Mammary epithelial cell (primary cell): ENCODE measurements at regions of chr22 and their contacts with region 1.

Region 1: DNA sequence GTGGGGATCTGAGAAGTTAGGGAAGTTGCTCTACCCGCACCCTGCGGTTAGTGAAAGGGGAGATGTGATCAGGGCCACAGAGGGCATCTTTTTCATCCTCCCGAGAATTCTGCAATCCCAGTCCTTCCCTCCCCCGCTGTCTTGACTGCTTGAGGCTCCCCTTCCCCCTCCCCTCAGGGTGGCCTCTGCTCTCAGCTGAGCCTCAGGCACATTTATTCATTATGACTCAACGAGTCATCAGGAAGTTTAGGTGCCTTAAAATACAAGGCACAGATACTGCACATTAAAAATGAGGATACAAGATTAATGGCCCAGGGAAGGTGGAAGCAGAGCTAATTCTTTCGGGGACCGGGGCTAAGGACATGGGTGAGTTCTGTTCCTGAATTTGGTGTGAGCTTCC is 104.0 kb downstream of the CACNA1I start:
- DNase-seq: peak; percentile 23
- H3K4me3 ChIP-seq: no peak overlapping the region
- H3K27ac ChIP-seq: no peak overlapping the region
- H3K4me1 ChIP-seq: peaks cover 3% of the 10 kb centered on the region
- H3K27me3 ChIP-seq: no peaks in the 10 kb centered on the region
- CTCF ChIP-seq: no peak

Region 2: DNA sequence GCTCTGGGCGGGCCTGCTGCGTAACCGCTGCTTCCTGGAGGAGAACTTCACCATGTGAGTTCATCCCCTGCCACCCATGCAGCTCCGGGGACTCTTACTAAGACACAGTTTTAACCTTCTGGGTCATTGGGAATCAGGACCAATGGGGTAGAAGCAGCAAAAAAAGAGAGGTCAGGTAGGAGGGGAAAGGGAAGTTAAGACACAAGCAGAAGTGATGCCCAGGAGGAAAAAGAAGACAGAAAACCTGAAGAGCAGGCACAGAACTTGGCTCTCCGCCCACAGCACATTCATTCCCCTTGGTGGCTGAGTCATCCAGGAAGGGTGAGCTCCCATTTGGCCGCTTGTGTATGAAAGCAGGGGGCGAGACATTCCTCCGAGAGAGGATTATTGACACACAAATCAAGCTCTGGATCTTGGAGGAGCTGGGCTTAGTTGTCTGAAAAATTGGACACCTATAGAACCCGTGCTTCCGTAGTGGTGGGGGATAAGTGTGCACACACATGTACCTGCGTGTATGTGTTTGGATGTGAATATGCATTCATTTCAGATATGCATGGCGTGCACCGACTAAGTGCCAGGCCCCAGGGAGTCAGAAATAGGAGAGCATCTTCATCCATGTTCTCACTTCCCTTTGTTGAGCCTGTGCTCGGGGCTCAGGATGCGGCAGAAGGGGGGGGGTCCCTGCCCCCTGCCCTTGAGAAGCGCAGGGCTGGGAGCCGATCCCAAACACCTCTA is 39.7 kb before region 1 on chr22:
- CTCF ChIA-PET with region 1: no interaction called
- dilution Hi-C with region 1: loop called (anchors 5 kb)
- in situ Hi-C with region 1: no loop called
- intact Hi-C with region 1: no loop called
- DNase-seq: peak; percentile 90
- H3K4me3 ChIP-seq: peak overlapping the region in 1 of 3 experiments; percentile 14
- H3K27ac ChIP-seq: peak overlapping the region; percentile 10
- H3K4me1 ChIP-seq: peaks cover 22% of the 10 kb centered on the region
- H3K27me3 ChIP-seq: no peaks in the 10 kb centered on the region
- CTCF ChIP-seq: no peak

Region 3: DNA sequence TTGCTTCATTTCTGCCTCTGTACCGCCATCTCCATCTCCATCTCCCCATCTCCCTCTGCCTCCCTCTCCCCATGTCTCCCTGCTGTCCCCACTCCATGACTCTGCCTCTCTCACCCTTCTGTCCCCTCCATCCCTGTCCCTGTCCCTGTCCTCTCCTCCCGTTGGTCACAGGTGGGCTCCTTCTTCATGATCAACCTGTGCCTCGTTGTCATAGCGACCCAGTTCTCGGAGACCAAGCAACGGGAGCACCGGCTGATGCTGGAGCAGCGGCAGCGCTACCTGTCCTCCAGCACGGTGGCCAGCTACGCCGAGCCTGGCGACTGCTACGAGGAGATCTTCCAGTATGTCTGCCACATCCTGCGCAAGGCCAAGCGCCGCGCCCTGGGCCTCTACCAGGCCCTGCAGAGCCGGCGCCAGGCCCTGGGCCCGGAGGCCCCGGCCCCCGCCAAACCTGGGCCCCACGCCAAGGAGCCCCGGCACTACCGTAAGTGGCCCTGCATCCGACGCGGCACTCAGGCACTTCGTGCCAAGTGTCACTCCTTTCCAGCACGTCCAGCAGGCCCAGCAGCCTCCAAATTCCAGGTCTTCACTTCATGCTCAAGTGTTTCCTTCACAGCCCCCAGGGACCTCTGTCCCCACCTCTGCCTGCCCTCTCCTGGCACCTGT is 28.0 kb before region 1 on chr22:
- CTCF ChIA-PET with region 1: no interaction called
- dilution Hi-C with region 1: no loop called
- in situ Hi-C with region 1: no loop called
- intact Hi-C with region 1: no loop called
- DNase-seq: no peak
- H3K4me3 ChIP-seq: no peak overlapping the region
- H3K27ac ChIP-seq: no peak overlapping the region
- H3K4me1 ChIP-seq: no peaks in the 10 kb centered on the region
- H3K27me3 ChIP-seq: no peaks in the 10 kb centered on the region
- CTCF ChIP-seq: no peak